ENCODE measurements at regions of chr19 and their contacts with region 1.

Region 1: GRCh38 chr19:13932911-13933393 is 5.3 kb downstream of the PODNL1 start:
- DNase-seq: no peak
- H3K4me3 ChIP-seq: no peak overlapping the region
- H3K27ac ChIP-seq: no peak overlapping the region
- H3K4me1 ChIP-seq: peaks cover 3 to 35% (median 15%) of the 10 kb centered on the region in 4 experiments
- H3K27me3 ChIP-seq: peaks cover 0 to 2% (median 0%) of the 10 kb centered on the region in 4 experiments; a peak in 1 of 7 replicates
- CTCF ChIP-seq: no peak
- EP300 ChIP-seq: no peak
- POLR2A ChIP-seq: no peak
- RAD21 ChIP-seq: no peak

Region 2: GRCh38 chr19:13277104-13277809 is 655.7 kb before region 1 on chr19:
- CTCF ChIA-PET with region 1: no interaction called
- POLR2A ChIA-PET with region 1: no interaction called
- DNase-seq: peak in 1 of 2 experiments; percentile 72
- H3K4me3 ChIP-seq: no peak overlapping the region
- H3K27ac ChIP-seq: no peak overlapping the region
- H3K4me1 ChIP-seq: peaks cover 0 to 4% (median 1%) of the 10 kb centered on the region in 4 experiments; a peak in 3 of 7 replicates
- H3K27me3 ChIP-seq: no peaks in the 10 kb centered on the region
- CTCF ChIP-seq: peak; percentile 3 to 77 (median 67)
- EP300 ChIP-seq: no peak
- POLR2A ChIP-seq: no peak
- RAD21 ChIP-seq: peak; percentile 83 to 87

Region 3: DNA sequence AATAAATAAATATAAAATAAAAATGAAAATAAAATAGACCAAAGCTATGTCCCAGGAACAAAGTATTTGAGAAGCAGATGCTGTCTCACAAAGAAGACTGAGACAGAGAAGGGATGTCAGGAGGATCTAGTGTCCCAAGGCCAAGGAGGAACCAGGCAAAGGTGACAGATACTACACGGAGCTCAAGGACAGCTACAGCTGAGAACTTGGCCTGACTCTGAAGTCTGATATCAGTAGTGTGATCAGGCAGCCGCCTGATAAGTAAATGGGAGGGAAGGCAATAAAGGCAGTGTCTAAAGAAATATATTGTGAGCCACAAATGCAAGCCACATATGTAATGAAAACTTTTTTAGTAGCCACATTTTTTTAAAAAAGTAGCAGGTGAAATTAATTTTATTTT is 76.5 kb before region 1 on chr19:
- CTCF ChIA-PET with region 1: no interaction called
- POLR2A ChIA-PET with region 1: no interaction called
- DNase-seq: no peak
- H3K4me3 ChIP-seq: no peak overlapping the region
- H3K27ac ChIP-seq: no peak overlapping the region
- H3K4me1 ChIP-seq: peaks cover 0 to 2% (median 2%) of the 10 kb centered on the region in 4 experiments; a peak in 5 of 7 replicates
- H3K27me3 ChIP-seq: no peaks in the 10 kb centered on the region; a peak in 1 of 7 replicates
- CTCF ChIP-seq: no peak
- EP300 ChIP-seq: no peak
- POLR2A ChIP-seq: no peak
- RAD21 ChIP-seq: no peak

Region 4: GRCh38 chr19:13920940-13921761 is 11.8 kb before region 1 on chr19:
- CTCF ChIA-PET with region 1: interaction called, 12 read pairs
- POLR2A ChIA-PET with region 1: interaction called, 21 read pairs
- DNase-seq: peak in 1 of 2 experiments; percentile 51
- H3K4me3 ChIP-seq: no peak overlapping the region
- H3K27ac ChIP-seq: peak overlapping the region; percentile 41; the same call in 1 of the 2 replicates
- H3K4me1 ChIP-seq: no peaks in the 10 kb centered on the region
- H3K27me3 ChIP-seq: no peaks in the 10 kb centered on the region
- CTCF ChIP-seq: no peak
- EP300 ChIP-seq: no peak
- POLR2A ChIP-seq: no peak
- RAD21 ChIP-seq: no peak